B cell (primary cell): ENCODE measurements at regions of chr6 and their contacts with region 1.

Region 1: DNA sequence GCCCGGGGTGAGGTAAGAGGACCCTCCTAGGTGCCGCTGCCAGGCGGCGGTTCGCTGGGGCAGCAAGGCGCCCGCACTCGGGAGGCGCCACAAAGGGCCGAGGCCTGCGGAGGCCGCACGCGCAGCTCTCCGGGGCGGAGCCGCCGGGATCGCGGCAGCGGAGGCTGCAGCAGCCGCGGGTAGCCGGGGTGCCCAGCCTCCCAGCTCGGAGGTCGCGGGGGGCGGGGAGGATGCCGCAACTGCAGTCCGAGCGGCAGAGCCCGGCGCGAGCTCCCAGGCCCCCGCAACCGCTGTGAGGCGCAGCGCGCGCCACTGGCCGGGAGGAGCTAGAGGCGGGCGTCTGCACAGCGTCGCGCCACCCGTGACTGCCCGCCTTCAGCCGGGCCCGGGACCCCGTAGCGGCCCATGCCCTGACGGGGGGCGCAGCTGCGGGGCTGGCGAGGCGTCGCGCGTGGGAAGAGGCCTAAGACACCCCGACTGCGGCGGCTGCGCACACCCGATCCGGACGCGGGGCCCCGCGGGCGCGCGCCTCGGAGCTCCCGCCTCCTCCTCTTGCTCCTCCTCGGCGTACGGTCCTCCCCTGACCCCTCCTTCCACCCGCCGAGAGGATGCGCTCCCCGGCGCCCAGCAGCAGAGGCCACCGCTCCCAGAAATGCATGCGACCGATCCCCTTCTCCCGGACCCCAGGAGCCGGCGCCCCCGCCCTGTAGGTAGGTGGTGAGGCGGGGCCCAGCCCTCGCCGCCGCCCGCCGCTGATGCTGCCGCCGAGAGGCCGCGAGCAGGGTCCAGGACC is at the start of gene NCOA7:
- DNase-seq: peak; percentile 85
- ATAC-seq: peak; percentile 77
- H3K4me3 ChIP-seq: peak within 1 kb of the TSS; percentile 47 to 88 (median 78)
- H3K4me3 Mint-ChIP-seq: peak within 1 kb of the TSS; percentile 93
- H3K27ac ChIP-seq: peak within 1 kb of the TSS; percentile 70 to 85
- H3K27ac Mint-ChIP-seq: peak within 1 kb of the TSS; percentile 99
- H3K4me1 ChIP-seq: peaks cover 20 to 30% of the 10 kb centered on the region in 2 donors
- H3K4me1 Mint-ChIP-seq: peaks cover 49% of the 10 kb centered on the region
- H3K27me3 ChIP-seq: no peaks in the 10 kb centered on the region
- H3K27me3 Mint-ChIP-seq: peaks cover under 1% of the 10 kb centered on the region
- CTCF ChIP-seq: no peak
- total RNA-seq, gene NCOA7: 27.0 and 27.4 TPM in 2 replicates

Region 2: GRCh38 chr6:125779924-125780539 is 10.5 kb before region 1 on chr6:
- CTCF ChIA-PET with region 1: interaction called, 89 read pairs
- POLR2A ChIA-PET with region 1: interaction called, 59 read pairs
- intact Hi-C with region 1: loop called (anchors 1 kb)
- DNase-seq: peak; percentile 95
- ATAC-seq: peak; percentile 83
- H3K4me3 ChIP-seq: peak overlapping the region; percentile 67 to 100 (median 84)
- H3K4me3 Mint-ChIP-seq: no peak overlapping the region
- H3K27ac ChIP-seq: peak overlapping the region; percentile 81 to 95
- H3K27ac Mint-ChIP-seq: no peak overlapping the region
- H3K4me1 ChIP-seq: peaks cover 5 to 6% of the 10 kb centered on the region in 2 donors
- H3K4me1 Mint-ChIP-seq: peaks cover 11% of the 10 kb centered on the region
- H3K27me3 ChIP-seq: no peaks in the 10 kb centered on the region
- H3K27me3 Mint-ChIP-seq: peaks cover 5% of the 10 kb centered on the region
- CTCF ChIP-seq: peak; percentile 37

Region 3: DNA sequence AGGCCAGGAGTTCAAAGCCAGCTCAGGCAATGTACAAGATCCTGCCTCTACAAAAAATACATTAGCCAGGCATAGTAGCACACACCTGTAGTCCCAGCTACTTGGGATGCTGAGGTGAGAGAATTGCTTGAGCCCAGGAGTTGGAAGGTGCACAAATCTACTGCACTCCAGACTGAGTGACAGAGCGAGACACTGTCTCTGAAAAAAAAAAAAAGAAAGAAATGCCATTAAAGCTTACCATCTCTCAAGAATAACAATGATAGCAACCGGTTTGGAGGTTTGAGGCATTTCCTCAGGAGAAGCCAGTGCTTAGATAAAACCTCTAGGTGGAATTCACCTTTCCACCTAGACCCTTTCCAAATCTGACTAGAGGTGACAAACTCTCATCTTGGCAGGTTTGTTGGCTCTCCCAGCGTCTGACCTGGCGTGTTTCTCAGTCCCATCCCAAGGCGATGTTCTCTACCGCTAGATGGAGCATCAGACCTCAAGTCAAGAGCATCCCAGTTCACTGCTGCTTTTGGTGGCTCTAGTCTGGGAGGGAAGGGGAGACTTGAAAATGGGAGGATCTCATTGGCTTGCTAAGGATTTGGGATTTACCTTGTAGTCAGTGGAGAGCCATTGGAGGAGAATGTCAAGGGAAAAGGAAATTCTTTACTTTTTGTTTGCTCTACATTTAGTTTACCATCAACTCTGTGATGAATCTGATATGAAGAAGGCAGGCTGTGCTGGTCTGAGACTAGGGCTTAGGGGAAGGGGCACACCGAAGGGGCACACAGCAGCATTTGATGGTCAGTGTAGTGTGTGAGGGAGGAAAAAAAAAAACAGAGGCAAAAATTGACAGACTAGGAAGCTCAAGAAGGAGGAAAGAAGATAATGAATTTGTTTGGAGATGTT is 68.1 kb after region 1 on chr6:
- CTCF ChIA-PET with region 1: interaction called, 7 read pairs
- POLR2A ChIA-PET with region 1: interaction called, 3 read pairs
- intact Hi-C with region 1: loop called (anchors 10 kb)
- DNase-seq: peak; percentile 47
- ATAC-seq: peak; percentile 39
- H3K4me3 ChIP-seq: no peak overlapping the region
- H3K4me3 Mint-ChIP-seq: no peak overlapping the region
- H3K27ac ChIP-seq: no peak overlapping the region
- H3K27ac Mint-ChIP-seq: no peak overlapping the region
- H3K4me1 ChIP-seq: no peaks in the 10 kb centered on the region
- H3K4me1 Mint-ChIP-seq: no peaks in the 10 kb centered on the region
- H3K27me3 ChIP-seq: no peaks in the 10 kb centered on the region
- H3K27me3 Mint-ChIP-seq: no peaks in the 10 kb centered on the region
- CTCF ChIP-seq: peak; percentile 47

Region 4: DNA sequence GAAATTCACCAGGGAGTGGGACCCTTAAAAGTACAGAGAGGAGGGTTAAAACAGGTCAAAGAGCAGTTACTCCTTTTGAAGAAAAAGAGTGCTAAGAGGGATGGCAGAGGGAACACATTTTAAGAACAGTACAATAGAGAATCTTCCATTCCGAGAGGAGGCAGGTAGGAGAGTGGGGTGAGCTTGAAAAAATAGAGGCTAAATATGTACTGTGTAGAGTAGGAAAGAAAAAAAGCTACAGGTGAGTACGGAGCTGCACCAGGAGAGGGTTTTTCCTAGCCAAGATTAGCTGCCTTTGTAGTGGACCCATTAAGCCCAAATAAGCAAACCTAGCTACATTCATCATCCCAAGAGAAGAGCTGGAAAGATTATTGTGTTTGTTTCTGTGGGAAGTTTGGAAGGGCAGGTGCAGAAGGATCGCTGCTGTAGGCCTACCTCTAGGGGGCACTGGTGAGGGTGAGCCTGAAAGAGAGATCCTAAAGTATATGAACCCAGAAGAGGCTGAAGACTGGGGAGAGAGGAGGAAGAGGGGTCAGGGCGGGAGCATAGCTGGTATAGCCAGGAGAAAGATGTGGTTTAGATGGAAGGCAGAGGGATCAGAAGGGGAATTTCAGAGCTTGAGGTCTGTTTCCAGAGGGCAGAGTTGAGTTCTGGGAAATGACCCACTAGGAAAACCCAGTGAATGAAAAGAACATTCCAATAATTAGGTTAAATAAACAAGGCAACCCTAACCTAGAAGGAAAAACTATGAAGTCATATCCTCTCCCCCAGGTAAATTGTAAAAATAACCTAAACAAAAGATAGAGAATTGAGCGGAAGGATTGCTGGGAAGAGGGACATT is 115.8 kb after region 1 on chr6:
- CTCF ChIA-PET with region 1: interaction called, 11 read pairs
- POLR2A ChIA-PET with region 1: interaction called, 4 read pairs
- intact Hi-C with region 1: no loop called
- DNase-seq: peak; percentile 48
- ATAC-seq: peak; percentile 45
- H3K4me3 ChIP-seq: no peak overlapping the region
- H3K4me3 Mint-ChIP-seq: no peak overlapping the region
- H3K27ac ChIP-seq: no peak overlapping the region
- H3K27ac Mint-ChIP-seq: no peak overlapping the region
- H3K4me1 ChIP-seq: no peaks in the 10 kb centered on the region
- H3K4me1 Mint-ChIP-seq: no peaks in the 10 kb centered on the region
- H3K27me3 ChIP-seq: no peaks in the 10 kb centered on the region
- H3K27me3 Mint-ChIP-seq: no peaks in the 10 kb centered on the region
- CTCF ChIP-seq: peak; percentile 68

Region 5: GRCh38 chr6:125918681-125919566 is 128.4 kb after region 1 on chr6:
- CTCF ChIA-PET with region 1: interaction called, 5 read pairs
- POLR2A ChIA-PET with region 1: no interaction called
- intact Hi-C with region 1: loop called (anchors 2 kb)
- DNase-seq: peak; percentile 81
- ATAC-seq: peak; percentile 88
- H3K4me3 ChIP-seq: peak overlapping the region; percentile 19 to 51 (median 33)
- H3K4me3 Mint-ChIP-seq: peak overlapping the region; percentile 75
- H3K27ac ChIP-seq: peak overlapping the region; percentile 50 to 85
- H3K27ac Mint-ChIP-seq: peak overlapping the region; percentile 72
- H3K4me1 ChIP-seq: peaks cover 13 to 14% of the 10 kb centered on the region in 2 donors
- H3K4me1 Mint-ChIP-seq: peaks cover 21% of the 10 kb centered on the region
- H3K27me3 ChIP-seq: no peaks in the 10 kb centered on the region
- H3K27me3 Mint-ChIP-seq: no peaks in the 10 kb centered on the region
- CTCF ChIP-seq: no peak

Region 6: GRCh38 chr6:127342946-127343808 is 1552.6 kb after region 1 on chr6 and contains the start of gene ECHDC1:
- CTCF ChIA-PET with region 1: no interaction called
- POLR2A ChIA-PET with region 1: no interaction called
- intact Hi-C with region 1: loop called (anchors 10 kb)
- DNase-seq: peak; percentile 80
- ATAC-seq: peak; percentile 69
- H3K4me3 ChIP-seq: peak within 1 kb of the TSS; percentile 70 to 97 (median 94)
- H3K4me3 Mint-ChIP-seq: no peak within 1 kb of the TSS
- H3K27ac ChIP-seq: peak within 1 kb of the TSS; percentile 63 to 77
- H3K27ac Mint-ChIP-seq: no peak within 1 kb of the TSS
- H3K4me1 ChIP-seq: peaks cover 37 to 47% of the 10 kb centered on the region in 2 donors
- H3K4me1 Mint-ChIP-seq: peaks cover 24% of the 10 kb centered on the region
- H3K27me3 ChIP-seq: no peaks in the 10 kb centered on the region
- H3K27me3 Mint-ChIP-seq: no peaks in the 10 kb centered on the region
- CTCF ChIP-seq: no peak
- total RNA-seq, gene ECHDC1: 60.0 and 60.5 TPM in 2 replicates